Activated CD4-positive, alpha-beta memory T cell treated with anti-CD3 and anti-CD28 coated beads for 36 hours (primary cell): ENCODE measurements at regions of chr4 and their contacts with region 1.

Region 1: GRCh38 chr4:7960790-7961655 is 21.4 kb upstream of the AFAP1 start:
- DNase-seq: peak; percentile 93
- H3K4me3 Mint-ChIP-seq: peak overlapping the region; percentile 38
- H3K27ac Mint-ChIP-seq: peak overlapping the region; percentile 94
- H3K4me1 Mint-ChIP-seq: peaks cover 53% of the 10 kb centered on the region
- H3K27me3 Mint-ChIP-seq: no peaks in the 10 kb centered on the region

Region 2: GRCh38 chr4:6695660-6696630 is 1265.1 kb before region 1 on chr4:
- CTCF ChIA-PET with region 1: no interaction called
- POLR2A ChIA-PET with region 1: no interaction called
- intact Hi-C with region 1: loop called (anchors 10 kb)
- DNase-seq: peak; percentile 76
- H3K4me3 Mint-ChIP-seq: peak overlapping the region; percentile 69
- H3K27ac Mint-ChIP-seq: peak overlapping the region; percentile 98
- H3K4me1 Mint-ChIP-seq: peaks cover 79% of the 10 kb centered on the region
- H3K27me3 Mint-ChIP-seq: no peaks in the 10 kb centered on the region

Region 3: GRCh38 chr4:7857238-7857701 is 103.8 kb before region 1 on chr4:
- CTCF ChIA-PET with region 1: no interaction called
- POLR2A ChIA-PET with region 1: no interaction called
- intact Hi-C with region 1: loop called (anchors 1 kb)
- DNase-seq: no peak
- H3K4me3 Mint-ChIP-seq: peak overlapping the region; percentile 17
- H3K27ac Mint-ChIP-seq: peak overlapping the region; percentile 82
- H3K4me1 Mint-ChIP-seq: peaks cover 75% of the 10 kb centered on the region
- H3K27me3 Mint-ChIP-seq: no peaks in the 10 kb centered on the region

Region 4: GRCh38 chr4:7939377-7940108 is 21.5 kb before region 1 on chr4 and contains the start of gene AFAP1:
- CTCF ChIA-PET with region 1: interaction called, 11 read pairs
- POLR2A ChIA-PET with region 1: interaction called, 17 read pairs
- intact Hi-C with region 1: loop called (anchors 1 kb)
- DNase-seq: peak; percentile 91
- H3K4me3 Mint-ChIP-seq: peak within 1 kb of the TSS; percentile 76
- H3K27ac Mint-ChIP-seq: no peak within 1 kb of the TSS
- H3K4me1 Mint-ChIP-seq: peaks cover 31% of the 10 kb centered on the region
- H3K27me3 Mint-ChIP-seq: no peaks in the 10 kb centered on the region
- total RNA-seq, gene AFAP1: 37.7 to 38.4 TPM

Region 5: GRCh38 chr4:7973545-7973981 is 12.5 kb after region 1 on chr4:
- CTCF ChIA-PET with region 1: interaction called, 9 read pairs
- POLR2A ChIA-PET with region 1: interaction called, 15 read pairs
- intact Hi-C with region 1: loop called (anchors 1 kb)
- DNase-seq: peak; percentile 65
- H3K4me3 Mint-ChIP-seq: peak overlapping the region; percentile 98
- H3K27ac Mint-ChIP-seq: peak overlapping the region; percentile 100
- H3K4me1 Mint-ChIP-seq: peaks cover 47% of the 10 kb centered on the region
- H3K27me3 Mint-ChIP-seq: no peaks in the 10 kb centered on the region

Region 6: DNA sequence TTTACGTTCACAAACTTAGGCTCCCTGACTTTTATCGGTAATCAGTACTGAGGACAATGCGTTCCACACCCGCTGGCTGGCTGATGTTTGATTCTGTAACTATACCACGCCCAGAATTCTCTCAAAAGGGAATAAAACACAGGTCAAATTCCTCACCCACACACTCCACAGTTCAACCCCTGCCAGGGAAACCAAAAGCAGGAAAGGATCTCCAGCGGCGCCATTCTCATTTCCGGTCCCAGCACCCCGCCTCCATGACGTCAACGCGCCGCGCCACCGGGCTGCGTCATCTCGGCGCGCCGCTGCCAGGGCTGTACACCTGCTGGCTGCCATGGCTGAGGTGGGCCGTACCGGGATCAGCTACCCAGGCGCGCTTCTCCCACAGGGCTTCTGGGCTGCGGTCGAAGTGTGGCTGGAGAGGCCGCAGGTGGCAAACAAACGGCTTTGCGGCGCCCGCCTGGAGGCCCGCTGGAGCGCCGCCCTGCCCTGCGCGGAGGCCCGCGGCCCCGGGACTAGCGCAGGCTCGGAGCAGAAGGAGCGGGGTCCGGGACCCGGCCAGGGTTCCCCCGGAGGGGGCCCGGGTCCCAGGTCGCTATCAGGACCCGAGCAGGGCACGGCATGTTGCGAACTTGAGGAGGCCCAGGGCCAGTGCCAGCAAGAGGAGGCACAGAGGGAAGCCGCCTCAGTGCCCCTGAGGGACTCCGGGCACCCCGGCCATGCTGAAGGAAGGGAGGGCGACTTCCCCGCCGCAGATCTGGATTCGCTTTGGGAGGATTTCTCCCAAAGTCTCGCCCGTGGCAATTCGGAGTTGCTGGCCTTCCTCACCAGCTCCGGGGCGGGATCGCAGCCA is 479.7 kb after region 1 on chr4 and contains the starts of genes ACOX3 and TRMT44:
- CTCF ChIA-PET with region 1: no interaction called
- POLR2A ChIA-PET with region 1: no interaction called
- intact Hi-C with region 1: loop called (anchors 10 kb)
- DNase-seq: peak; percentile 97
- H3K4me3 Mint-ChIP-seq: peak within 1 kb of the TSS; percentile 95
- H3K27ac Mint-ChIP-seq: peak within 1 kb of the TSS; percentile 99
- H3K4me1 Mint-ChIP-seq: peaks cover 73% of the 10 kb centered on the region
- H3K27me3 Mint-ChIP-seq: no peaks in the 10 kb centered on the region
- total RNA-seq, gene ACOX3: 42.3 to 45.8 TPM
- total RNA-seq, gene TRMT44: 24.1 to 29.2 TPM